Dorsolateral prefrontal cortex (tissue), 120 donors: ENCODE measurements at regions of chr2 and their contacts with region 1.

Region 1: DNA sequence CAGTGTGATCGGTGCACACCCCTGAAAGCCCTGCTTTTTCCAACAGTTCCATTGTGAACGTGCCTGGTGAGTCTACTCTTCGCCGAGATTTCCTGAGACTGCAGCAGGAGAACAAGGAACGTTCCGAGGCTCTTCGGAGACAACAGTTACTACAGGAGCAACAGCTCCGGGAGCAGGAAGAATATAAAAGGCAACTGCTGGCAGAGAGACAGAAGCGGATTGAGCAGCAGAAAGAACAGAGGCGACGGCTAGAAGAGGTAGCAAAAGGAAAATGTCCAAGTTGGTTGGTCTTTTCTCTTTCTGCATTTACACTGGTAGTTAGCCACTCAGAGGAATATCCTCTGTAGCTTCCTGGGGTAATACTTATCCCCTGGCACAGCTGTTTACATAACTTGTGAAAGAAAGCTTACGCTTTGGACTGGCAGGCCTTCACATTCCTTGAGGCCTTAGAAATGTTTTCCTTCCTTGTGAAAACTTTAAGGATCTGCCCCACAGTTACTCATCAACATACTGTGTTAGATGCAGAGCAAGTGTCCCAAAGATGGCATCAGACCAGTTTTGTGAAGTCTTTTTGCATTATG is 146.6 kb downstream of the MAP4K4 start:
- DNase-seq: peak in 1 of 10 donors; percentile 39
- H3K4me3 ChIP-seq: peak overlapping the region in 5 of 59 donors; percentile 3 to 27 (median 15)
- H3K27ac ChIP-seq: peak overlapping the region in 57 of 59 donors; percentile 2 to 85 (median 67)
- H3K27me3 ChIP-seq: no peaks in the 10 kb centered on the region
- CTCF ChIP-seq: no peak

Region 2: GRCh38 chr2:101831351-101831865 is 12.7 kb before region 1 on chr2:
- intact Hi-C with region 1: no loop called
- DNase-seq: peak; percentile 62 to 88 (median 78)
- H3K4me3 ChIP-seq: peak overlapping the region in 1 of 59 donors; percentile 3
- H3K27ac ChIP-seq: peak overlapping the region; percentile 1 to 98 (median 90)
- H3K27me3 ChIP-seq: no peaks in the 10 kb centered on the region
- CTCF ChIP-seq: peak; percentile 43 to 94 (median 84)

Region 3: DNA sequence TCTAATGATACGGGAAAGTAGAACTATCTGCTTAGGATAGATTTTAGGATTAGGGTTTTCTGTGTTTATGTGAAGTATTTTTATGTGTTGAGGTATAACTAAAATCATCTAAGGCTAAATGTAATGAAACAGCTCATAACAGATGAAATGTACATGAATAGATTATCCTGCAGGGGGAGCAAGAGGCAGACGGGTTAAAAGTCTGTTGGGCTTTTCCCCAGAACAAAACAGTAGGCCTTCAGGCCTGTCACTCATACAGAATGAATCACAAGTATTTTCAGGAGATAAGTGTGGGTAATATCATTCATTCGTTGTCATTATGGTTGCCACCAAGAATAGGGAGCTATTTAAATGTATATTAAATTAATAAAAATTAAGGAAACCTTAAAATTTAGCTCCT is 39.7 kb after region 1 on chr2:
- intact Hi-C with region 1: loop called in 1 of 2 experiments (anchors 5 kb)
- DNase-seq: no peak
- H3K4me3 ChIP-seq: no peak overlapping the region
- H3K27ac ChIP-seq: peak overlapping the region in 9 of 59 donors; percentile 8 to 56 (median 24)
- H3K27me3 ChIP-seq: no peaks in the 10 kb centered on the region
- CTCF ChIP-seq: peak in 55 of 56 donors; percentile 23 to 73 (median 54)